ENCODE measurements at regions of chr12 and their contacts with region 1.

Region 1: GRCh38 chr12:131104463-131105350 is 151.0 kb downstream of the ADGRD1 start:
- DNase-seq: peak; percentile 61 to 85 (median 79)
- ATAC-seq: peak; percentile 52
- H3K4me3 ChIP-seq: no peak overlapping the region
- H3K4me3 Mint-ChIP-seq: peak overlapping the region; percentile 35
- H3K27ac ChIP-seq: no peak overlapping the region
- H3K27ac Mint-ChIP-seq: peak overlapping the region; percentile 18
- H3K4me1 ChIP-seq: peaks cover 17% of the 10 kb centered on the region
- H3K4me1 Mint-ChIP-seq: peaks cover 17% of the 10 kb centered on the region
- H3K27me3 ChIP-seq: no peaks in the 10 kb centered on the region
- H3K27me3 Mint-ChIP-seq: peaks cover 2% of the 10 kb centered on the region
- CTCF ChIP-seq: peak; percentile 71

Region 2: GRCh38 chr12:130661486-130662255 is 443.0 kb before region 1 on chr12:
- CTCF ChIA-PET with region 1: no interaction called
- POLR2A ChIA-PET with region 1: no interaction called
- intact Hi-C with region 1: no loop called
- DNase-seq: no peak
- ATAC-seq: no peak
- H3K4me3 ChIP-seq: no peak overlapping the region
- H3K4me3 Mint-ChIP-seq: no peak overlapping the region
- H3K27ac ChIP-seq: no peak overlapping the region
- H3K27ac Mint-ChIP-seq: no peak overlapping the region
- H3K4me1 ChIP-seq: no peaks in the 10 kb centered on the region
- H3K4me1 Mint-ChIP-seq: no peaks in the 10 kb centered on the region
- H3K27me3 ChIP-seq: no peaks in the 10 kb centered on the region
- H3K27me3 Mint-ChIP-seq: peaks cover 5% of the 10 kb centered on the region
- CTCF ChIP-seq: no peak

Region 3: GRCh38 chr12:131116391-131117117 is 11.8 kb after region 1 on chr12:
- CTCF ChIA-PET with region 1: interaction called, 17 read pairs
- POLR2A ChIA-PET with region 1: no interaction called
- intact Hi-C with region 1: no loop called
- DNase-seq: no peak
- ATAC-seq: no peak
- H3K4me3 ChIP-seq: no peak overlapping the region
- H3K4me3 Mint-ChIP-seq: no peak overlapping the region
- H3K27ac ChIP-seq: no peak overlapping the region
- H3K27ac Mint-ChIP-seq: no peak overlapping the region
- H3K4me1 ChIP-seq: no peaks in the 10 kb centered on the region
- H3K4me1 Mint-ChIP-seq: no peaks in the 10 kb centered on the region
- H3K27me3 ChIP-seq: no peaks in the 10 kb centered on the region
- H3K27me3 Mint-ChIP-seq: peaks cover 2% of the 10 kb centered on the region
- CTCF ChIP-seq: no peak

Region 4: DNA sequence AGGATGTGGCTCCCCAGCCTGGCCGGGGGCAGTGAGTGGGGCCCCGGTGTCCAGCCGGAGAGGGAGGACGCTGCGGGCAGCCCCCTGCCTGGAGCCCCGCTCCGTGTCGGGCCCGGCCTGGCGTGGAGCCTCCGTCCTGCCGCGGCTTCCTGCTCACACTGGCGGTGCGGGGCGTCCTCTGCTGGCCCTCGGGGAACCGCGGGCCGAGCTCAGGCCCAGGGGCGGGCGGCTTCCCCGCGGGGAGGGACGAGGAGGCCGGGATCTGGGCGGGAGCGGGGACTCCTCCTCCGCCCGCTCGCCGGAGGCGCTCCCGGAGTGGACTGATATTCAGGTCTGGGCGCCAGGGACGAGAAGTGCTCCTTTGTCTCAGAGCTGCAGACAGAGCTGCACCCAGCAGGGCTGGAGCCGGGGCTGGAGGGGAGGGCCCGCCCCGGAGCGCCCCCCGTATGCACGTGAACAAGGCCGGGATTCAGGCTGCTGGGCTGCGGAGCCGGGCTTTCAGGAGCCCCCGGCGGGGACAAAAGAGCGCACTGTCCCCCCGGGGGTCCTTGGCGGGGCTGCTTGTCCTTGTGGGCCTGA is 725.7 kb after region 1 on chr12:
- CTCF ChIA-PET with region 1: no interaction called
- POLR2A ChIA-PET with region 1: no interaction called
- intact Hi-C with region 1: loop called in 1 of 2 experiments (anchors 10 kb)
- DNase-seq: peak in 3 of 9 experiments; percentile 32 to 47 (median 37)
- ATAC-seq: no peak
- H3K4me3 ChIP-seq: peak overlapping the region; percentile 16 to 35
- H3K4me3 Mint-ChIP-seq: peak overlapping the region; percentile 67
- H3K27ac ChIP-seq: no peak overlapping the region
- H3K27ac Mint-ChIP-seq: no peak overlapping the region
- H3K4me1 ChIP-seq: peaks cover 25% of the 10 kb centered on the region
- H3K4me1 Mint-ChIP-seq: peaks cover 12% of the 10 kb centered on the region
- H3K27me3 ChIP-seq: peaks cover 11 to 17% of the 10 kb centered on the region in 2 experiments
- H3K27me3 Mint-ChIP-seq: peaks cover 35% of the 10 kb centered on the region
- CTCF ChIP-seq: no peak

Region 5: DNA sequence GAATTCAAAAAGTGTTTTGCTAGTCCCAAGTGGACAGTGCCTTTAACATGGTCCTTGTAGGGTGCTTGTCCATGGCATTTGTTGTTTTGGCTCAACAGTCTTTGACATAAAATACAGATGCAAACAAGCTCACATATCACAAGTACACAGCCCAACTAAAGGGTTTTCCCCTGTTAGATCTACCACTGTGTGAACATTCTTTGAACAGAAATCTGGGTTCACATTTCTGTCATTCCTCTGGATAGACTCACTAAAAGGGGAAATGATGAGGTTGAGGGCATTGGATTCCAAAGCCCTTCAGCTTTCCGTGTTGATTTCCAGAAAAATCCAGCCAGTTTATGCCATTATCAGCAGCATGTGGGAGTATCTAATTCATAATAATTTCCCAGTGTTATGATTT is 899.1 kb after region 1 on chr12:
- CTCF ChIA-PET with region 1: no interaction called
- POLR2A ChIA-PET with region 1: no interaction called
- intact Hi-C with region 1: loop called (anchors 2 to 5 kb)
- DNase-seq: no peak
- ATAC-seq: no peak
- H3K4me3 ChIP-seq: no peak overlapping the region
- H3K4me3 Mint-ChIP-seq: no peak overlapping the region
- H3K27ac ChIP-seq: no peak overlapping the region
- H3K27ac Mint-ChIP-seq: no peak overlapping the region
- H3K4me1 ChIP-seq: no peaks in the 10 kb centered on the region
- H3K4me1 Mint-ChIP-seq: no peaks in the 10 kb centered on the region
- H3K27me3 ChIP-seq: no peaks in the 10 kb centered on the region
- H3K27me3 Mint-ChIP-seq: no peaks in the 10 kb centered on the region
- CTCF ChIP-seq: no peak

Measured in CD8-positive, alpha-beta T cell (primary cell).